ENCODE measurements at regions of chr3 and their contacts with region 1.

Region 1: GRCh38 chr3:187738331-187739093 is 6.8 kb downstream of the BCL6 start:
- DNase-seq: peak; percentile 83
- H3K4me3 Mint-ChIP-seq: peak overlapping the region; percentile 99
- H3K27ac Mint-ChIP-seq: peak overlapping the region; percentile 100
- H3K4me1 Mint-ChIP-seq: peaks cover 53% of the 10 kb centered on the region
- H3K27me3 Mint-ChIP-seq: peaks cover 7% of the 10 kb centered on the region

Region 2: DNA sequence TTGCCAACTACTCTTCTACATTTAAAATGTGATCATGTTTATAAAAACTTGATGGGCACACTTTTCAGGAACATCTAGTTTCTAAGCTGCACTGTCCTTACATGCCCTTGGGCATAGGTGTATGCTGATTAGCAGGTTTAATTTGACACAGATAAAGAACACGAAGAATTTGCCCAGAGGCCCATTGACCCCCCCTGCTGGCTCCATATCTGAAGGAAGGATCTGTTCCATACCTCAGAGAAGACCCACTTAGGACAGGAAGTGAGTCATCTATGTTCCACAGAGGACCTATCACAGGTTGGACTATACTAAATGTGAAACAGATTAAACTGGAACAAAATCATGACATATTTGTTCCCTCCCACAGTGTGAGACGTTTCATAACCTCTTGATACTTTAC is 322.6 kb after region 1 on chr3:
- CTCF ChIA-PET with region 1: interaction called, 15 read pairs
- DNase-seq: peak; percentile 65
- H3K4me3 Mint-ChIP-seq: no peak overlapping the region
- H3K27ac Mint-ChIP-seq: no peak overlapping the region
- H3K4me1 Mint-ChIP-seq: peaks cover 32% of the 10 kb centered on the region
- H3K27me3 Mint-ChIP-seq: no peaks in the 10 kb centered on the region

Region 3: GRCh38 chr3:188082031-188082430 is 343.5 kb after region 1 on chr3:
- CTCF ChIA-PET with region 1: no interaction called
- DNase-seq: no peak
- H3K4me3 Mint-ChIP-seq: no peak overlapping the region
- H3K27ac Mint-ChIP-seq: no peak overlapping the region
- H3K4me1 Mint-ChIP-seq: no peaks in the 10 kb centered on the region
- H3K27me3 Mint-ChIP-seq: peaks cover 7% of the 10 kb centered on the region

Region 4: GRCh38 chr3:188664795-188665194 is 926.3 kb after region 1 on chr3:
- CTCF ChIA-PET with region 1: interaction called, 11 read pairs
- DNase-seq: no peak
- H3K4me3 Mint-ChIP-seq: no peak overlapping the region
- H3K27ac Mint-ChIP-seq: no peak overlapping the region
- H3K4me1 Mint-ChIP-seq: no peaks in the 10 kb centered on the region
- H3K27me3 Mint-ChIP-seq: no peaks in the 10 kb centered on the region

Region 5: DNA sequence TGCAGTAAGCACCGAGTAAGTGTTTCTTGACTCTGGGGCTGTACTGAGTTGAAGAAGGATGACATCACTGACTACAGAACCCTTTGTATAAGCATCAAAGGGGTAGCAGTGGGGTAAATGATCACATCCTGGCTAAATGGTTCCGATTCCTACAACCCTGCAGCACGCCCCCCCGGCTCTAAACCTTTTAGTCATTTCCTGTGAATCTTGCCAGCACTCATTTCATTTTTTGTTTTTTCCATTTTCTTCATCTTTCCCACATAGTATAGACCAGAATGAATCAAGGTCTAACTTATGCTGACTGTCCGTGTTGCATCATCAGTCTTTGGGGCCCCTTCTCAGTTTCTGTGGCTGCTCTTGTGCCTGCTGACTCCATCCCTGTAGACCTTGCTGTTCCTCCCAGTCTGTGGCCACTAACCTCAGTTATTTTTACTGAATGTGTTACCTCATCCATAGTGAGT is 1050.1 kb after region 1 on chr3:
- CTCF ChIA-PET with region 1: interaction called, 10 read pairs
- DNase-seq: peak; percentile 75
- H3K4me3 Mint-ChIP-seq: no peak overlapping the region
- H3K27ac Mint-ChIP-seq: no peak overlapping the region
- H3K4me1 Mint-ChIP-seq: no peaks in the 10 kb centered on the region
- H3K27me3 Mint-ChIP-seq: no peaks in the 10 kb centered on the region

Region 6: DNA sequence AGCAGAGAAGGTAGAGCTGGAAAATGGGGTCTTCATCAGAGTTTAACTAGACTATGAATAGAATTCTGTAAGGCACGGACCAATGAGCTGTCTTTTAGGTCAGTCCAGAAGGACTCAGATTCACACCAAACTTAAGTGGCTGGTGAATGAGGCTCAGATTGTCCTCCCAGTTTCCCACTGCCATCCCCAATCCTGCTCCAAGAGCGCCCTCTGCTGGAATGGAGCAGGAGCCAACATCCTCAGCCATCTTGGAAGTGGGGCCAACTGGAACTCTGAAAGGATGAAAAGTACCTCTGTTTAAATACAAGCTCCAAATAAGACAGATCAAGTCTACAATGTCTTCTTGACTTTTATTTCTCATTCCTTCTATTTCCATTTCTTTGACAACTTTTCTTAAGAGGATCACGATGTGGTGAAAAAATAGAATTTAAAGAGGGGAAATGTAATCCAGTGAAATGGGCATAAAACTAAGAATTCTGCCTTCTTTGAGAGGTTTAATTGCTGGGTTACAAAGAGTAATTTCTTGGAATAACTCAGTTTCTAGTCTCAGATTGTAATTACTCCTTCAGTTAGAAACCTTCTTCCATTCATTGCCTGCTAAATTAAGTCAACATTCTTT is 1216.2 kb after region 1 on chr3:
- CTCF ChIA-PET with region 1: interaction called, 331 read pairs
- DNase-seq: peak; percentile 85
- H3K4me3 Mint-ChIP-seq: no peak overlapping the region
- H3K27ac Mint-ChIP-seq: peak overlapping the region; percentile 37
- H3K4me1 Mint-ChIP-seq: peaks cover 22% of the 10 kb centered on the region
- H3K27me3 Mint-ChIP-seq: peaks cover 6% of the 10 kb centered on the region

Region 7: DNA sequence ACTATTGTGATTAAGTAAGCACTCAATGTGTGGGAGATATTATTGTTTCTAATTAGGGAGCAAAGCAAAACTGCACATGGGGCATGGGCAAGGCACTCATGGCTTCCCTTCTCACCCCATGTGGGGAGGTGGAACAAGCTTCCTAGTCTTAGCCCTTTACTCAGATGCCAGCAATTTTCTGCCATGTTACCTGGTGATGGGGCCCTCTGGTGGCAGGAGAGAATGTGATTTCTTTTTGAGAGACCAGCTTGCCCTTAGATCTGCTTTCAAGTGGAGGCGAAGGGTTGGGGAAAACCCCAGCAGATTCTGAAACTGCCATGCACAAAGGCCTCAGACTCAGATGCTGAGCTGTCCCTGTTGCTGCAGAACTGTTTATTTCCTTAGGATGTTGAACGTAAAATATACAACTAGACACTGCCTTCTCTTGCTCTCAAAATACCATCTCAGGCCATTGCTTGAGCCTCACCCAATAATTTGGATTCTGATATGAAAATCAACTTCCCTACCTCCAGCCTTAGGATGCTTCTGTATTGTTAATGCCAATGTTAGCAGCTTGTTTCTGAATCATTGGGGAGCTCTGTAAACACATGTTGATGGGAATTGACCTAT is 1303.1 kb after region 1 on chr3:
- CTCF ChIA-PET with region 1: interaction called, 71 read pairs
- DNase-seq: peak; percentile 86
- H3K4me3 Mint-ChIP-seq: no peak overlapping the region
- H3K27ac Mint-ChIP-seq: peak overlapping the region; percentile 35
- H3K4me1 Mint-ChIP-seq: peaks cover 47% of the 10 kb centered on the region
- H3K27me3 Mint-ChIP-seq: no peaks in the 10 kb centered on the region

Measured in activated naive CD4-positive, alpha-beta T cell treated with anti-CD3 and anti-CD28 coated beads, Interleukin-2, amount 10 ng/mL, durations not matched to agents 7 days and 5 days (primary cell).